ENCODE measurements at regions of chr15 and their contacts with region 1.

Region 1: GRCh38 chr15:92625251-92625980 is 30.2 kb downstream of the FAM174B start:
- DNase-seq: peak; percentile 46
- ATAC-seq: peak; percentile 89
- H3K4me3 Mint-ChIP-seq: no peak overlapping the region
- H3K27ac Mint-ChIP-seq: peak overlapping the region; percentile 90
- H3K4me1 Mint-ChIP-seq: peaks cover 31% of the 10 kb centered on the region
- H3K27me3 Mint-ChIP-seq: peaks cover 3% of the 10 kb centered on the region

Region 2: GRCh38 chr15:91706322-91707032 is 918.9 kb before region 1 on chr15:
- CTCF ChIA-PET with region 1: no interaction called
- POLR2A ChIA-PET with region 1: no interaction called
- intact Hi-C with region 1: loop called in 1 of 2 experiments (anchors 10 kb)
- DNase-seq: peak; percentile 93
- ATAC-seq: peak; percentile 99
- H3K4me3 Mint-ChIP-seq: peak overlapping the region; percentile 9
- H3K27ac Mint-ChIP-seq: no peak overlapping the region
- H3K4me1 Mint-ChIP-seq: peaks cover 17% of the 10 kb centered on the region
- H3K27me3 Mint-ChIP-seq: peaks cover 12% of the 10 kb centered on the region

Region 3: DNA sequence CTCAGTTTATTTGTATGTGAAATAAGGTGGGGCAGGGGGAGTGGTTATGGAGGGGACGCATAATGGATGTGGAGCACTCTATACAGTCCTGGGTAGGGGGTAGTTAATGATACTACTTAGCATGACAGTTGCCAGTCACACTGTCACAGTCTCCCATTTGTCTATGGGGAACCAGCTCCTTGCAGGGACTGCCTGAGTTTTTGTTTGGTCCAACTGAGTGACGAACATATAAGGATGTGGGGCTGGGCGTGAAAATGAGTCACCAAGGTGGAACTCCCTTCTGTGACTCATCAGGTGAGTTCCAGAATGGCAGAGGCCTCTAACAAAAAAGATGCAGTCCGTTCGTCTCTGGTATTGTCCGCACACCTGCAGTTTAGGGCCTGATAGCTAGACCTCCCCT is 467.0 kb before region 1 on chr15:
- CTCF ChIA-PET with region 1: no interaction called
- POLR2A ChIA-PET with region 1: no interaction called
- intact Hi-C with region 1: loop called in 1 of 2 experiments (anchors 5 kb)
- DNase-seq: peak; percentile 75
- ATAC-seq: peak; percentile 98
- H3K4me3 Mint-ChIP-seq: no peak overlapping the region
- H3K27ac Mint-ChIP-seq: no peak overlapping the region
- H3K4me1 Mint-ChIP-seq: peaks cover 18% of the 10 kb centered on the region
- H3K27me3 Mint-ChIP-seq: no peaks in the 10 kb centered on the region

Region 4: GRCh38 chr15:92611993-92612745 is 13.2 kb before region 1 on chr15:
- CTCF ChIA-PET with region 1: no interaction called
- POLR2A ChIA-PET with region 1: no interaction called
- intact Hi-C with region 1: no loop called
- DNase-seq: peak; percentile 31
- ATAC-seq: peak; percentile 33
- H3K4me3 Mint-ChIP-seq: no peak overlapping the region
- H3K27ac Mint-ChIP-seq: no peak overlapping the region
- H3K4me1 Mint-ChIP-seq: no peaks in the 10 kb centered on the region
- H3K27me3 Mint-ChIP-seq: no peaks in the 10 kb centered on the region

Region 5: GRCh38 chr15:92655178-92655995 is 30.0 kb after region 1 on chr15 and contains the start of gene FAM174B:
- CTCF ChIA-PET with region 1: interaction called, 5 read pairs
- POLR2A ChIA-PET with region 1: no interaction called
- intact Hi-C with region 1: loop called in 1 of 2 experiments (anchors 2 kb)
- DNase-seq: peak; percentile 66
- ATAC-seq: peak; percentile 79
- H3K4me3 Mint-ChIP-seq: peak within 1 kb of the TSS; percentile 66
- H3K27ac Mint-ChIP-seq: no peak within 1 kb of the TSS
- H3K4me1 Mint-ChIP-seq: peaks cover 8% of the 10 kb centered on the region
- H3K27me3 Mint-ChIP-seq: peaks cover 25% of the 10 kb centered on the region
- total RNA-seq, gene FAM174B: 4.0 to 4.9 TPM

Region 6: DNA sequence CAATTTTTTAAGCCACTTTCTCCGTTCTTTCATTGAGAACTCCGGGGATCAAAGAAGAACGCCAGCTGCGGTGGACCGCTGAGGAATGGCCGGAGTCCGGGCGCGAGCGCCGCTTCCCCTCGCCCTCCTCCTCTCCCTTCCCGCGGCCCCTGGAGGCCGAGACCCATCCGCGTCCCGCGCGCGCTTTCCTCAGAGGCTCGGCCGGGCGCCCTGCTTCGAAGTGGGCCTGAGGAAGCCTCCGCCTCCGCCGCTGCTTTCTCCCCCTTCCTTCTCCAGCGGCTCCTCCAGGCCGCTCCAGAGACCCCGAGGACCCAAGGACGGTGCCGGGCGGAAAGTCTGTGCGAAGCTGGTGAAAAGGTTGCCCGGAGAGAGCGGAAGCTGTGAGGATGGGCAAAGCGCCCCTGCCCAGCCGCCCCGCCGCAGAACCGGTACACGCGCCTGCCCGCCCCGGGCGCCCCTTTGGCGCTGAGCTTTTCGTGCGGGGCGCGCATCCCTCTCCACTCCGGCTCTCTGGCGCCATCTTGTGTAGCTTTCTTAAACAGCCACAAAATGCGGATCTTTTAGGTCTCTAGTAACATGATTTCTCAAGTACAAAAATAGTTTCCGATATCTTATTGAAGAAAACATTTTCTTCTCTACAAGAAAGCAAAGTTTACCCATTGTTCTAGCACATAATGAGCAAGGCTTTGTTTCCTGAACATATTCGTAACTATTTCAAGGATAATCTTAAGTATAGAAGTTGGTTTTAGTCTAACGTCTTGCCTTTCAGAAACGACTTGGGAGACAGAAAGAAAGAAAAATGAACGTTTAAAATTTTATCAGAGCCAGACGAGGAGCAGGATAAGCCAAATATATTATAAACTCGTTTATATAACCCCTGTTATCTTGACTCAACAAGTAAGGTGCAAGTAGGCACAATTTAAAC is 89.3 kb after region 1 on chr15:
- CTCF ChIA-PET with region 1: interaction called, 5 read pairs
- POLR2A ChIA-PET with region 1: no interaction called
- intact Hi-C with region 1: loop called in 1 of 2 experiments (anchors 5 kb)
- DNase-seq: peak; percentile 85
- ATAC-seq: peak; percentile 86
- H3K4me3 Mint-ChIP-seq: peak overlapping the region; percentile 53
- H3K27ac Mint-ChIP-seq: no peak overlapping the region
- H3K4me1 Mint-ChIP-seq: peaks cover 5% of the 10 kb centered on the region
- H3K27me3 Mint-ChIP-seq: peaks cover 15% of the 10 kb centered on the region

Region 7: GRCh38 chr15:92820236-92821021 is 195.0 kb after region 1 on chr15:
- CTCF ChIA-PET with region 1: no interaction called
- POLR2A ChIA-PET with region 1: no interaction called
- intact Hi-C with region 1: no loop called
- DNase-seq: peak; percentile 92
- ATAC-seq: peak; percentile 63
- H3K4me3 Mint-ChIP-seq: peak overlapping the region; percentile 82
- H3K27ac Mint-ChIP-seq: peak overlapping the region; percentile 77
- H3K4me1 Mint-ChIP-seq: peaks cover 64% of the 10 kb centered on the region
- H3K27me3 Mint-ChIP-seq: no peaks in the 10 kb centered on the region

Region 8: DNA sequence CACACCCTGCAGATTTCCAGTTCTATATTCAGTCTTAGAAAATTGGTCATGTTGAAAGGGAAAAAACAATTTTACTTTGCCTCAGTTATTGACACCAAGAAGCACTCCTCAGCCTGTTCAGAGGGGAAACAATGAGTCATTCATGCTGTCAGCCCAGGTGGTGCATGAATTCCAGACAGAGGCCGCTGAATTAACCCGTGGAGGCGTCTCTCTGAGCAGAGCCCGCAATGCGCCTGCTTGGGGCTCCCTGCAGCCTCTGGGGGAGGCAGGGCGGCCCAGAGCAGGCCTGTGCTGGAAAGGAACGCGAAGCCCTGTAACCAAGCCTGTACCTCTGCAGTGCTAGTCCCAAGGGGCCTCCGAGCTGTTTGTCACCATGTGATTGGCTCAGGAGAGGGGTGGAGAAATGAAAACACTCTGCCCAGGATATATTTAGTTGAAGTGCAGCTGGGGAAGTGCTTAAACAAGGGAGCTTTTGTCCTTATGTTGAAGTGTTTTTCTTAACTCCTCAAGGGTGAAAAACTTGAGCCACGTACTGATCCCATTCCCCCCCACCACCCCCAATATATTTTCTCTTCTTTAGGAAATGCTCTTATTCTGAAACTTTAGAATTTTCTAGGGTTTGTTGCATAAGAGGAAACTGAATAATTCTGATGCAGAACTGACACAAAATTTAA is 206.4 kb after region 1 on chr15:
- CTCF ChIA-PET with region 1: no interaction called
- POLR2A ChIA-PET with region 1: interaction called, 3 read pairs
- intact Hi-C with region 1: loop called in 1 of 2 experiments (anchors 1 kb)
- DNase-seq: peak; percentile 96
- ATAC-seq: peak; percentile 95
- H3K4me3 Mint-ChIP-seq: peak overlapping the region; percentile 65
- H3K27ac Mint-ChIP-seq: peak overlapping the region; percentile 96
- H3K4me1 Mint-ChIP-seq: peaks cover 58% of the 10 kb centered on the region
- H3K27me3 Mint-ChIP-seq: no peaks in the 10 kb centered on the region

Region 9: DNA sequence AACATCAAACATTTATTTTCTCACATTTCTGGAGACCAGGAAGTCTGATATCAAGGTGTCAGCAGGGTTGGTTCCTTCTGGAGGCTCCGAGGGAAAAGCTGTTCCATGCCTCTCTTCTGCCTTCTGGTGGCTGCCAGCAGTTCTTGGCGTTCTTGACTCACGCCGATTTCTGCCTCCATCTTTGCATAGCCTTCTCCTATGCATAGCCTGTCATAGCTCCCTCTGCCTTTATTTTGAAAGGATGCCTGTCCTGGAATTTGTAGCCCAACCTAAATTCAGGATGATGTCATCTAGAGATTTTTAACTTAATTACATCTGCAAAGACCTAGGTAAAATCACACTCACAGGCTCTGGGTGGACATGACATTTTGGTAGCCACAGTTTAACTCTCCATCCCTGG is 393.2 kb after region 1 on chr15:
- CTCF ChIA-PET with region 1: no interaction called
- POLR2A ChIA-PET with region 1: no interaction called
- intact Hi-C with region 1: loop called in 1 of 2 experiments (anchors 5 kb)
- DNase-seq: no peak
- ATAC-seq: no peak
- H3K4me3 Mint-ChIP-seq: no peak overlapping the region
- H3K27ac Mint-ChIP-seq: peak overlapping the region; percentile 80
- H3K4me1 Mint-ChIP-seq: peaks cover 71% of the 10 kb centered on the region
- H3K27me3 Mint-ChIP-seq: no peaks in the 10 kb centered on the region